K562 (cell line): ENCODE measurements at regions of chr3 and their contacts with region 1.

Region 1: GRCh38 chr3:126540342-126540849 is 16.4 kb downstream of the CHST13 start:
- DNase-seq: peak in 1 of 4 experiments; percentile 45
- ATAC-seq: peak; percentile 68
- H3K4me3 ChIP-seq: no peak overlapping the region
- H3K27ac ChIP-seq: peak overlapping the region; percentile 75
- H3K4me1 ChIP-seq: peaks cover 14 to 23% of the 10 kb centered on the region in 2 experiments
- H3K27me3 ChIP-seq: peaks cover 0 to under 1% of the 10 kb centered on the region in 2 experiments; a peak in 2 of 5 replicates
- CTCF ChIP-seq: no peak
- EP300 ChIP-seq: peak; percentile 75
- POLR2A ChIP-seq: no peak
- RAD21 ChIP-seq: no peak

Region 2: GRCh38 chr3:126329927-126330725 is 210.3 kb before region 1 on chr3:
- CTCF ChIA-PET with region 1: no interaction called
- POLR2A ChIA-PET with region 1: no interaction called
- in situ Hi-C with region 1: no loop called
- intact Hi-C with region 1: no loop called
- DNase-seq: no peak
- ATAC-seq: no peak
- H3K4me3 ChIP-seq: no peak overlapping the region
- H3K27ac ChIP-seq: no peak overlapping the region
- H3K4me1 ChIP-seq: no peaks in the 10 kb centered on the region
- H3K27me3 ChIP-seq: peaks cover 0 to 4% of the 10 kb centered on the region in 2 experiments; a peak in 1 of 5 replicates
- CTCF ChIP-seq: no peak
- EP300 ChIP-seq: no peak
- POLR2A ChIP-seq: no peak
- RAD21 ChIP-seq: no peak

Region 3: GRCh38 chr3:126475413-126476114 is 64.8 kb before region 1 on chr3 and contains the start of gene ZXDC:
- CTCF ChIA-PET with region 1: no interaction called
- POLR2A ChIA-PET with region 1: interaction called, 3 read pairs
- in situ Hi-C with region 1: no loop called
- intact Hi-C with region 1: loop called (anchors 2 kb)
- DNase-seq: peak; percentile 90 to 97 (median 95)
- ATAC-seq: peak; percentile 86
- H3K4me3 ChIP-seq: peak within 1 kb of the TSS; percentile 61
- H3K27ac ChIP-seq: peak within 1 kb of the TSS; percentile 79
- H3K4me1 ChIP-seq: peaks cover 24 to 28% of the 10 kb centered on the region in 2 experiments; a peak in 4 of 5 replicates
- H3K27me3 ChIP-seq: no peaks in the 10 kb centered on the region
- CTCF ChIP-seq: peak; percentile 32 to 60 (median 53); a peak in 5 of 6 replicates
- EP300 ChIP-seq: no peak
- POLR2A ChIP-seq: no peak
- RAD21 ChIP-seq: peak in 1 of 2 experiments; percentile 29; a peak in 1 of 4 replicates
- polyA plus RNA-seq, gene ZXDC: 0.59 to 0.65 TPM